ENCODE measurements at regions of chr5 and their contacts with region 1.

Region 1: DNA sequence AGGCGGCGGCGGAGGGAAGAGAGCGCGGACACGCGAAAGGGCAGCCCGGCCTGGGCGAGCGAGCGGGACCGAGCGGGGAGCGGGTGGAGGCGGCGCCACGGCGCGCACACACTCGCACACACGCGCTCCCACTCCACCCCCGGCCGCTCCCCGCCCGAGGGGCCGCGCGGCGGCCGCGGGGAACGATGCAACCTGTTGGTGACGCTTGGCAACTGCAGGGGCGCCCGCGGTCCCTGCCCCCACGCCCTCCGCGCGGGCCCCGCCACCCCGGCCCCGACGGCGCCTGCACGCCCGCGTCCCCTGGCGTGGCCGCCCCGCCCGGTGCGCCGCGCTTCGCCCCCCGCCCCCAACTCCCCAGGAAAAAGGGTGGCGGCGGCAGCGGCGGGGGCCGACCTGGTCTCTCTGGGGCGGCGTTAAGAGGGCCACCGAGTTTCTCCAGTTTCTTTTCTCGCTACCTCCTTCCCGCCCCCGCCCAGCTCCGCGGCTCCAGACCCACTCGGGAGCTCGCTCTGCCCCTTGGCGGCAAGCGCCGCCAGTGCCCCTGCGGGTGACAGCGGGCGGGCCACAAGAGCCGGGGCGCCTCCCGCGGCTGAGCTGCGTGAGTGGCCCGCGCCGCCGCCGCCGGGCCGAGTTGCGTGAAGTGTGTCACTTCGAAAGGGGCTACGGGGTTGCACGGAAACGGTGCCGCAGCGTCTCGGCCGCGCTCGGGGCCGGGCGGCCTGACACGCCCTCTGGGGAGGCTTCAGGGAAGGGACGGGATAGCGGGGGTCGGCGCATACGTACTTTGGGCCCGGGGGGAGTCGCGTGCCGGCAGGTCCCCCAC is at the start of gene NR3C1:
- DNase-seq: peak; percentile 86
- H3K4me3 ChIP-seq: peak within 1 kb of the TSS; percentile 91
- H3K27ac ChIP-seq: peak within 1 kb of the TSS; percentile 96
- H3K4me1 ChIP-seq: peaks cover 46% of the 10 kb centered on the region
- CTCF ChIP-seq: peak; percentile 41
- total RNA-seq, gene NR3C1: 45.0 and 45.6 TPM in 2 replicates

Region 2: DNA sequence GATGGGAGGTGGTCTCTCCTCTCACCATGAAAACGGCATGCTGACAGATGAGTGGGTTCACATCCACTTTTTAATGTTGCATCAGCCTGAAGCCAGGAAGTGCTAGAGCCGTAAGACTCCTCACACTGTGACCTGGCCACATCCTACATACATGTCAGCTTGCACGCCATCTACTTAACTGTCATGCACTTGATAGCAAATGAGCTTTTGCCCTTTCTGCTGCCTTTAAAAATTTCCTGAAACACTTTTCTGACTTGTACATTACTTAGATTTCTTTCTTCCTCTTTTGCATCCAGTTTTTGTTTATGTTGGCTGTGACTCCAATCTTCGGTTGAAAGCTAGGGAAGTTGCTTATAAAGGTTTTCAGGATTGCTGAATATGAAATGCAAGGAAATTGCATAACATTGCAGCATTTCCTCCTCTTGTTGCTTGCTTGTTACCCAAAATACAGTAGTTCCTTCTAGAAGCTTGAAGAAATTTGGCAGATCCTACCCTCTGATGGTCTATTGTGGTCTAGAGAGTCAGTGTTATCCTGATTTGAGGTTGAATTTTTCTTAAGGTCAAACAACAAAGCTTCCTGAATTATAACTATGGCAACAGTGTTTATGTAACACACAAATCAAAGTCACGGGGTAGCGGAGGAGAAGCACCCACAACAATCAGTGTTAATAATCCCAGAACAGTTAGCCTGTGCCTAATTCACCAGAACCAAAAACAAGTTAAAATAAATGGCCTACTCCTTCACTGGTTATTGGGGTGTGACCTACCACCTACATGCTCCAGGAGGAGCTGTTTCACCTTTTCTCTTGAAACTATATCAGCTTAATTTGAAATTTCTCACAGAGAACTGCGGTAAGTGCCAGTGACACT is 401.1 kb before region 1 on chr5:
- CTCF ChIA-PET with region 1: no interaction called
- POLR2A ChIA-PET with region 1: interaction called, 13 read pairs
- intact Hi-C with region 1: loop called (anchors 2 kb)
- DNase-seq: peak; percentile 91
- H3K4me3 ChIP-seq: no peak overlapping the region
- H3K27ac ChIP-seq: peak overlapping the region; percentile 60
- H3K4me1 ChIP-seq: peaks cover 47% of the 10 kb centered on the region
- CTCF ChIP-seq: peak; percentile 75

Region 3: DNA sequence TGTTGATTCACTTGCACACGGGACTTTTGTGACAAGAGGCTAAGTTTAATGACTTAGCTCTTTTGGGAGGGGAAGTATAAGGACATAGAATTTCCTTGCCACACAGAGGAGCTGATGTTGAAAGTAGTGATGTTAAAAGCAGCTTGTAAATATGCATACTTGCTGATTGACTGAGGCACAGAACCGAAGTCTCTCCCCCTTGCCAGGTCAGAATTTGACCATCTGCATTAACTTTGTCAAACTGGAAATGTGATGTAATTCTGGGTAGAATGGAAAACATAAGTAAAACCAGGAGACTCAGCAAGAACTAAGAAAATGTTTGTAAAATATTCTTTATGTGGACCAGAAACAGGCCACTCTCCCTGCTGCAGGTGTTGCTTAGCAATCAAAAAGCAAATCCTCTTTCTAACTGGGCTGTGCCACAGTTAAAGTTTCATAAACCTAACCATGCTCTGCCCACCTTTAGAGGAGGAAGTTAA is 284.5 kb before region 1 on chr5:
- CTCF ChIA-PET with region 1: no interaction called
- POLR2A ChIA-PET with region 1: no interaction called
- intact Hi-C with region 1: loop called (anchors 5 kb)
- DNase-seq: peak; percentile 3
- H3K4me3 ChIP-seq: no peak overlapping the region
- H3K27ac ChIP-seq: no peak overlapping the region
- H3K4me1 ChIP-seq: peaks cover 7% of the 10 kb centered on the region
- CTCF ChIP-seq: no peak

Region 4: GRCh38 chr5:143413958-143414669 is 10.3 kb after region 1 on chr5:
- CTCF ChIA-PET with region 1: no interaction called
- POLR2A ChIA-PET with region 1: interaction called, 13 read pairs
- intact Hi-C with region 1: no loop called
- DNase-seq: peak; percentile 69
- H3K4me3 ChIP-seq: peak overlapping the region; percentile 55
- H3K27ac ChIP-seq: peak overlapping the region; percentile 68
- H3K4me1 ChIP-seq: peaks cover 74% of the 10 kb centered on the region
- CTCF ChIP-seq: peak; percentile 53

Region 5: GRCh38 chr5:143592648-143593047 is 188.8 kb after region 1 on chr5:
- CTCF ChIA-PET with region 1: no interaction called
- POLR2A ChIA-PET with region 1: interaction called, 3 read pairs
- intact Hi-C with region 1: loop called (anchors 2 kb)
- DNase-seq: peak; percentile 93
- H3K4me3 ChIP-seq: peak overlapping the region; percentile 52
- H3K27ac ChIP-seq: peak overlapping the region; percentile 93
- H3K4me1 ChIP-seq: peaks cover 73% of the 10 kb centered on the region
- CTCF ChIP-seq: no peak

Region 6: DNA sequence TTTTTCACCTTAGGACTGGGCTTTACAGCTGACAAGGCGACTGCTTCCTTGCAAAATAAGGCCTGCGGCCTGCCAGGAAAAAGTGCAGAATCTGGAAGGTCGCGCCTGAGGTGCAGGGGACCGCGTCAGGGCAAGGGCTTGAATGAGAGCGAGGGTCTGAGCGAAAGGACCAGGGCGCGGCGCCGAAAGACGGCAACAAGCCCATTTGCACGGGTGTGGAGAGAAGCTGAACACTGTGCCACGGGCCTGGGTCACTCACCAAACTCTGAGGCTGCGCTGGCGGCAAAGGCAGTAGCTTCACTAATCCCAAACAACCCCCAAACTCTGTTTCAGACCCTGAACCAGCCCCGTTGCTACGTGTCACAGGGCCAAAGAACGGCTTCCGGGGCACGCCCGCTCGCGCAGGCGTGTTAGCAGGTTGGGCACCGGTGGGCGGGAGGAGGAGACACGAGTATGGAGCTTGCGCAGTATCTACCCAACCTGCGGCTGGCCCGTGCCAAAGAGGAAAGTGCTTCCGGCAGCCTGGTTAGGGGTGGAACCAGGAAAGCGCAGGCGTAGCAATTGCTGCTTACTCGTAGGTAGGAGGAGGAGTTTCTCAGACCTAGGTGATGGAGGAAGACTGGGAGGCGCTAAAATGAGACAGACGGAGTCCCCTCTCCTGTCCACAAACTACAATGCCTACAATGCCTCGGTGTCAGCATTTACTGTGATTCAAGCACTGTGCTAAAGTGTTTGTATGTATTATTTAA is 766.6 kb after region 1 on chr5 and contains the starts of genes KCTD16 and YIPF5:
- CTCF ChIA-PET with region 1: no interaction called
- POLR2A ChIA-PET with region 1: no interaction called
- intact Hi-C with region 1: loop called (anchors 10 kb)
- DNase-seq: peak; percentile 97
- H3K4me3 ChIP-seq: peak within 1 kb of the TSS; percentile 77
- H3K27ac ChIP-seq: peak within 1 kb of the TSS; percentile 5
- H3K4me1 ChIP-seq: peaks cover 18% of the 10 kb centered on the region
- CTCF ChIP-seq: no peak
- total RNA-seq, gene KCTD16: 0.18 and 0.19 TPM in 2 replicates
- total RNA-seq, gene YIPF5: 8.8 and 11.9 TPM in 2 replicates